ENCODE measurements at regions of chr11 and their contacts with region 1.

Region 1: GRCh38 chr11:118791111-118791965 is at the start of gene DDX6:
- DNase-seq: peak; percentile 84 to 94 (median 87)
- H3K4me3 ChIP-seq: peak within 1 kb of the TSS; percentile 68
- H3K4me3 Mint-ChIP-seq: peak within 1 kb of the TSS; percentile 94 to 100 (median 100)
- H3K27ac ChIP-seq: peak within 1 kb of the TSS; percentile 94
- H3K27ac Mint-ChIP-seq: peak within 1 kb of the TSS; percentile 99 to 100 (median 99)
- H3K4me1 ChIP-seq: peaks cover 27% of the 10 kb centered on the region
- H3K4me1 Mint-ChIP-seq: peaks cover 23 to 34% (median 31%) of the 10 kb centered on the region in 3 donors
- H3K27me3 ChIP-seq: no peaks in the 10 kb centered on the region
- H3K27me3 Mint-ChIP-seq: no peaks in the 10 kb centered on the region
- total RNA-seq, gene DDX6: 187 to 189 TPM

Region 2: DNA sequence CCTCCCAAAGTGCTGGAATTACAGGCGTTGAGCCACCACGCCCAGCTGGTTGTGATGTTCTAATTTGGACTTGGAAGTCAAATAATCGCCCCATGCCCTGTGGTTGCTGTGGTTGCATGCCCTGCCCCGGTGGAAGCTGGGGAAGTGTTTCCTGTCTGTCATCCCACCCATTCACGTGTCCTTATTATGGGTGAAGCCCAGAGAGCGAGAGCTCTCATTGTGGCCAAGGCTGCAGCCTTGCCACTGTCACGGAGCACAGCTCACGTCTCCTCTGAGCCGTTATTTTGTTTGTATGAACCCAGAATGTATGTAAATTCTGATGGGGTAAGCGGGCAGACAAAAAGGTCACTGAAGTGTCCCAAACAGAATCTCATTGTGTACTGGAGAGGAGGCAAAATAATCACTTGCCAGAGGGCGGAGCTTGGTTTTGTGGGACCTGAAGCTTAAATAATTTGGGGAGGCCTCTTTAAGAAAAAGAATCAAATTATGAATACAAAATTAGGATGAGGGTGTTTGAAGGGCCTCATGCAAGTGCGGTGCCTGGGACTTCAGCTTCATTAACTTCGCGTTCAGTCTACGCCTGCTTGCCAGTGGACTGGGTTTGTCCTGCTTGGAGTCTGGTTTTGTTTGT is 86.1 kb before region 1 on chr11:
- CTCF ChIA-PET with region 1: interaction called, 28 read pairs
- POLR2A ChIA-PET with region 1: interaction called, 14 read pairs
- DNase-seq: peak; percentile 29 to 75 (median 70)
- H3K4me3 ChIP-seq: peak overlapping the region; percentile 21
- H3K4me3 Mint-ChIP-seq: peak overlapping the region; percentile 8 to 81 (median 64)
- H3K27ac ChIP-seq: no peak overlapping the region
- H3K27ac Mint-ChIP-seq: peak overlapping the region; percentile 67 to 96 (median 83)
- H3K4me1 ChIP-seq: peaks cover 44% of the 10 kb centered on the region
- H3K4me1 Mint-ChIP-seq: peaks cover 32 to 50% (median 46%) of the 10 kb centered on the region in 3 donors
- H3K27me3 ChIP-seq: no peaks in the 10 kb centered on the region
- H3K27me3 Mint-ChIP-seq: no peaks in the 10 kb centered on the region

Region 3: GRCh38 chr11:118870396-118871345 is 79.3 kb after region 1 on chr11:
- CTCF ChIA-PET with region 1: interaction called, 48 read pairs
- POLR2A ChIA-PET with region 1: interaction called, 81 read pairs
- DNase-seq: peak in 1 of 5 donors; percentile 58
- H3K4me3 ChIP-seq: peak overlapping the region; percentile 35
- H3K4me3 Mint-ChIP-seq: peak overlapping the region; percentile 72 to 92 (median 83)
- H3K27ac ChIP-seq: peak overlapping the region; percentile 87
- H3K27ac Mint-ChIP-seq: peak overlapping the region; percentile 98 to 100 (median 99)
- H3K4me1 ChIP-seq: peaks cover 62% of the 10 kb centered on the region
- H3K4me1 Mint-ChIP-seq: peaks cover 47 to 69% (median 56%) of the 10 kb centered on the region in 3 donors
- H3K27me3 ChIP-seq: no peaks in the 10 kb centered on the region
- H3K27me3 Mint-ChIP-seq: no peaks in the 10 kb centered on the region

Region 4: DNA sequence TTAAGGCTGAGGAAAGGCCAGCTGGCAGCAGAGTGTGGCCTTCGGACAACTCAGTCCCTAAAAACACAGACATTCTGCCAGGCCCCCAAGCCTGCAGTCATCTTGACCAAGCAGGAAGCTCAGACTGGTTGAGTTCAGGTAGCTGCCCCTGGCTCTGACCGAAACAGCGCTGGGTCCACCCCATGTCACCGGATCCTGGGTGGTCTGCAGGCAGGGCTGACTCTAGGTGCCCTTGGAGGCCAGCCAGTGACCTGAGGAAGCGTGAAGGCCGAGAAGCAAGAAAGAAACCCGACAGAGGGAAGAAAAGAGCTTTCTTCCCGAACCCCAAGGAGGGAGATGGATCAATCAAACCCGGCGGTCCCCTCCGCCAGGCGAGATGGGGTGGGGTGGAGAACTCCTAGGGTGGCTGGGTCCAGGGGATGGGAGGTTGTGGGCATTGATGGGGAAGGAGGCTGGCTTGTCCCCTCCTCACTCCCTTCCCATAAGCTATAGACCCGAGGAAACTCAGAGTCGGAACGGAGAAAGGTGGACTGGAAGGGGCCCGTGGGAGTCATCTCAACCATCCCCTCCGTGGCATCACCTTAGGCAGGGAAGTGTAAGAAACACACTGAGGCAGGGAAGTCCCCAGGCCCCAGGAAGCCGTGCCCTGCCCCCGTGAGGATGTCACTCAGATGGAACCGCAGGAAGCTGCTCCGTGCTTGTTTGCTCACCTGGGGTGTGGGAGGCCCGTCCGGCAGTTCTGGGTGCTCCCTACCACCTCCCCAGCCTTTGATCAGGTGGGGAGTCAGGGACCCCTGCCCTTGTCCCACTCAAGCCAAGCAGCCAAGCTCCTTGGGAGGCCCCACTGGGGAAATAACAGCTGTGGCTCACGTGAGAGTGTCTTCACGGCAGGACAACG is 104.1 kb after region 1 on chr11:
- CTCF ChIA-PET with region 1: interaction called, 42 read pairs
- POLR2A ChIA-PET with region 1: interaction called, 59 read pairs
- DNase-seq: peak; percentile 55 to 86 (median 75)
- H3K4me3 ChIP-seq: peak overlapping the region; percentile 53
- H3K4me3 Mint-ChIP-seq: peak overlapping the region; percentile 40 to 83 (median 75)
- H3K27ac ChIP-seq: peak overlapping the region; percentile 54
- H3K27ac Mint-ChIP-seq: peak overlapping the region; percentile 84 to 97 (median 90)
- H3K4me1 ChIP-seq: peaks cover 73% of the 10 kb centered on the region
- H3K4me1 Mint-ChIP-seq: peaks cover 64 to 85% (median 72%) of the 10 kb centered on the region in 3 donors
- H3K27me3 ChIP-seq: no peaks in the 10 kb centered on the region
- H3K27me3 Mint-ChIP-seq: peaks cover 0 to 5% of the 10 kb centered on the region in 2 donors

Region 5: GRCh38 chr11:118928108-118928870 is 137.0 kb after region 1 on chr11:
- CTCF ChIA-PET with region 1: interaction called, 56 read pairs
- POLR2A ChIA-PET with region 1: interaction called, 48 read pairs
- DNase-seq: peak; percentile 90 to 98 (median 96)
- H3K4me3 ChIP-seq: peak overlapping the region; percentile 70
- H3K4me3 Mint-ChIP-seq: peak overlapping the region; percentile 83 to 100 (median 98)
- H3K27ac ChIP-seq: peak overlapping the region; percentile 96
- H3K27ac Mint-ChIP-seq: peak overlapping the region; percentile 92 to 100 (median 99)
- H3K4me1 ChIP-seq: peaks cover 31% of the 10 kb centered on the region
- H3K4me1 Mint-ChIP-seq: peaks cover 39 to 51% (median 41%) of the 10 kb centered on the region in 3 donors
- H3K27me3 ChIP-seq: no peaks in the 10 kb centered on the region
- H3K27me3 Mint-ChIP-seq: peaks cover 0 to 14% of the 10 kb centered on the region in 2 donors